ENCODE measurements at regions of chr17 and their contacts with region 1.

Region 1: DNA sequence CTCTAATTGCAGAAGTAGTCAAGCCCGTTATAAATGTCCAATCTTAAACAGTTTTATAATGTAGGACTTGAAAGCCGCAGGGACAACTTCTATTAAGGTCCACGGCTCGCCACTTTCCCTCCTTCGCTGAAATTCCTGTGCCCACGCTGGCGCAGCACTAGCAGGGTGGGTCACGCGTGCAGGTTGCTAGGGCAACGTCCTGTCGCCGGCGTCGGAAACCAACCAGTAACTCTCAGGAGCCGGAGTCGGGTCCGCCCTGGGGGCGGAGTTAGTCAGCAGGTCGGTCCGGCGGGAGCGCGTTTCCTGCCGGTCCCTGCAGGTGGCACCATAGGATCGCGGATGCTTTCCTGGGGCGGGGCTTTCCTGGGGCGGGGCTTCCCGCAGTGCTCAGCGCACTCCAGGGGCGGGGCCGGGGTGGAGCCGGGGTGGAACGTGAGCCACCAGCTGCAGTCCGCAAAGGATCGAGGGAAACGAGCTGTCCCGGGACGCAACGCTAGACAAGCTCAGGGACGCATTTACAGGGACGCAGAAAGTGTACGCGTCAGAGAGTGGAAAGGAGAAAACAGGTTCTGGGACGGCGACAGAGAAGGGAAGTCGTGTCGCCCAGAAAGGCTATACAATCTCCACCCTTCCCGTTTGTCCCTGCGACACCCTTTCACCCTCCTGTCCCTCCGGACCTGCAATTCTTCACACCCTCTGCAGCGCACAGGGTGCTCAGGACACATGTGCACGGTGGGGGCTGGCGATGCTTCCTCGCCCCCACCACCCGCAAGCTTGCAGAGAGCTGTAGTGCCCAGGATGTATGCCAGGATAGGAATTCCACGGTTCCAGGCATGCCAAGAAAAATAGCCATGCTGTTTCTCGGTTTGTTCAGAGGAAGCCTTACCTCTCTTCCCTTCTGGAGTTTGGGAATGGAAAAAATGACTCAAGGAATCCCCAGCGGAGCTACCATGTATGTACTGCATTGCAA is 12.4 kb downstream of the COPZ2 start:
- DNase-seq: peak; percentile 96
- H3K4me3 Mint-ChIP-seq: peak overlapping the region; percentile 90
- H3K27ac Mint-ChIP-seq: peak overlapping the region; percentile 100
- H3K4me1 Mint-ChIP-seq: peaks cover 40% of the 10 kb centered on the region
- H3K27me3 Mint-ChIP-seq: no peaks in the 10 kb centered on the region
- CTCF ChIP-seq: peak; percentile 77

Region 2: DNA sequence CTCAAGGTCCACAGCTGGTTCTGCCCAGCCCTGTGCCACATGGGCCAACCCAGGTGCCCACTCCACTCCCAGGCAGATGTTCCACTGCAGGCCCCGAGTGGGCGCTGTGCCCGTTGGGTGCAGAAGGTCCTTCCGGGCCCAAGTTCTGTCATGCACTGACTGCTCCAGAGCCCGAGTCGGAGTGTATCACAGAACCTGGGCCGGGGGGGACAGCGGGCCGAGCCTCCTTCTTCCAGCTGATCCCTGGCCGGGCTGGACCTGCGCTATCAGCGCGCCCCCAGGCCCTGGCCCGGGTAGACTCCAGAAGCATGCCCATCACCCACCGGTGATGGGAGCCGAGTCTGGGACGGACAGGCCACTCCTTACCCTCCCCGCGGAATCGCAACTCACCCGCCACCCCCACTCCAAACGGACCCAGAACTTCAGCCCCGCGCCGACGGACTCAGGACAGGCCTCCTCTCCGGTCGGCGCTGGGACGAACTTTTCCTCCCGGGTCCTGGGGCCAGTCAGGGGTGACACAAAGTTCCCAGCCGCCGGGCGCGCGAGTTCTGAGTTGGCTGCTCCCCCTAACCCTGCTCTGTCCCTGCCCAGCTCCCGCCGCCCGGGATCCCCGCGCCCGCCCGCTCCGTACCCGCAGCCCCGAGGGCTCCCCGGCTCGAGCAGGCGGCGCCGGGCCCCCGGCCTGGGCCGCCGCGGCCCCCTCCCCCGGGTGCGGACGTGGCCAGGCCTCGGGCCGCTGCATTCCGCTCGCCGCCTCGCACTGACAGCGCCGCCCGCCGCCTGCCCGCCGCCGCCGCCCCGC is 12.0 kb after region 1 on chr17 and contains the start of gene COPZ2:
- CTCF ChIA-PET with region 1: interaction called, 61 read pairs
- POLR2A ChIA-PET with region 1: interaction called, 7 read pairs
- intact Hi-C with region 1: no loop called
- DNase-seq: no peak
- H3K4me3 Mint-ChIP-seq: peak within 1 kb of the TSS; percentile 63
- H3K27ac Mint-ChIP-seq: no peak within 1 kb of the TSS
- H3K4me1 Mint-ChIP-seq: no peaks in the 10 kb centered on the region
- H3K27me3 Mint-ChIP-seq: no peaks in the 10 kb centered on the region
- CTCF ChIP-seq: no peak
- total RNA-seq, gene COPZ2: 2.5 TPM in 1 of 2 replicates, not detected in the other

Region 3: GRCh38 chr17:48054238-48055185 is 29.3 kb after region 1 on chr17:
- CTCF ChIA-PET with region 1: interaction called, 19 read pairs
- POLR2A ChIA-PET with region 1: interaction called, 220 read pairs
- intact Hi-C with region 1: no loop called
- DNase-seq: peak; percentile 76
- H3K4me3 Mint-ChIP-seq: peak overlapping the region; percentile 91
- H3K27ac Mint-ChIP-seq: peak overlapping the region; percentile 93
- H3K4me1 Mint-ChIP-seq: peaks cover 67% of the 10 kb centered on the region
- H3K27me3 Mint-ChIP-seq: no peaks in the 10 kb centered on the region
- CTCF ChIP-seq: no peak

Region 4: GRCh38 chr17:48068491-48068961 is 43.3 kb after region 1 on chr17:
- CTCF ChIA-PET with region 1: interaction called, 202 read pairs
- POLR2A ChIA-PET with region 1: interaction called, 74 read pairs
- intact Hi-C with region 1: no loop called
- DNase-seq: no peak
- H3K4me3 Mint-ChIP-seq: no peak overlapping the region
- H3K27ac Mint-ChIP-seq: no peak overlapping the region
- H3K4me1 Mint-ChIP-seq: peaks cover 21% of the 10 kb centered on the region
- H3K27me3 Mint-ChIP-seq: no peaks in the 10 kb centered on the region
- CTCF ChIP-seq: peak; percentile 19

Region 5: DNA sequence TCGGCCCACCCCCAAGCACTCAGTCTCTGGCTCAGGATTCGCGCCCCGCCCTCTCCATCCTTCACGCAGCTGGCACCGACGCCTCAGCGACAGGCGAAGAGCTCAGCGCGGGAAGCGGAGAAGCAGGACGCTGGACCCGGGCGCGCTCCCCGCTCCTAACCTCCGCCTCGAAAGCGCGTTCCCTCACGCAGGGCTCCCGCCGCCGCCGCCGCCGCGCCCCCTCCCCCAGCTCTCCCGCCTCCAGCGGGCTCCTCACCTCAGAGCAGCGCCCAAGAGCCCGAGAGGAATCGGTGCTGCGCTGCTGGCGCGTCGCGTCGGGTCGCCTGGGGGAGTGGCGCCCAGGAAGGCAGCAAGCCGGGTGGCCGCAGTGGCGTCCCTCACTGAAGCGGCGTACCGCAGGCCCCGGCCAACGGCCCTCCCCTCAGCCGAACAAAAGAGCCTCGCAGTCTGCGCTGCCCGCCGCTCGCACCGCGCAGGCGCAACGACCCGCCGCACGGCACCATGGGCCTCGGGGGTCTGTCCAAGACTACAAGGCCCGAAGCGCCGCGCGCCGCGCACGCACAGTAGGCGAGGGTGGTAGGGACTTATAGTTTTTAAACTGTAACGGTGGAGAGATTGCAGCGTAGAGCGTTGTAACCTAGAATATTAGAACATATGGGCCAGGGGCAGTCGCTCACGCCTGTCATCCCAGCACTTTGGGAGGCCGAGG is 75.9 kb after region 1 on chr17 and contains the start of gene CBX1:
- CTCF ChIA-PET with region 1: interaction called, 10 read pairs
- POLR2A ChIA-PET with region 1: interaction called, 59 read pairs
- intact Hi-C with region 1: no loop called
- DNase-seq: peak; percentile 91
- H3K4me3 Mint-ChIP-seq: peak within 1 kb of the TSS; percentile 92
- H3K27ac Mint-ChIP-seq: peak within 1 kb of the TSS; percentile 20
- H3K4me1 Mint-ChIP-seq: peaks cover 10% of the 10 kb centered on the region
- H3K27me3 Mint-ChIP-seq: no peaks in the 10 kb centered on the region
- CTCF ChIP-seq: no peak
- total RNA-seq, gene CBX1: 77.3 and 81.2 TPM in 2 replicates

Region 6: DNA sequence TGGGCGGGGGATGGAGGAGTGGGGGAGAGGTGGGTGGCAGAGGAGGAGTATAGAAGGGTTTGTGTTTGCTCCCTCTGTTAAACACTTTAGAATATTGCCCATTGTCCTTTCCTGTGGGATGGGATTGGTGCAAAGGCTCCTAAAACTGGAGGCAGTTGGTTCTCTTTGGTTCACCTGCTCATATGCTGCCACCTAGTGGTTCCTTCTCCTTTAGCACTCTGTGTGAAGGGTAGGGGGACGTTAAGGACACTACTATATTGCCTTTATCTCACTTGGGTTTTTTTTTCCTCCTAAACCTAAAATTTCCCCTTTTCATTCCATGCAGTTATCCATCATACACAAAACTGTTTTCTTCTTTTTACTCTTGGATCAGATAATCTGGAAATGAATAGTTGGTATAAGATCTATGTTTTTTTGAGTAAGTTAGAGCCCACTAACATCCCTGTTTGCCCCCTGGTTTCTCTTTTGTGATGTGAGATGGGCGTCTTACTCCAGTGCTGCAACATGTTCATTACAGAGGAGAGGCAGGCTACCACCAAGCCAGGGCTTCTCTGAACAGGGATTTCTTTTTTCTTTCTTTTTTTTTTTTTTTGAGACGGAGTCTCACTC is 106.1 kb after region 1 on chr17:
- CTCF ChIA-PET with region 1: interaction called, 18 read pairs
- POLR2A ChIA-PET with region 1: interaction called, 11 read pairs
- intact Hi-C with region 1: loop called (anchors 1 kb)
- DNase-seq: peak; percentile 85
- H3K4me3 Mint-ChIP-seq: no peak overlapping the region
- H3K27ac Mint-ChIP-seq: no peak overlapping the region
- H3K4me1 Mint-ChIP-seq: peaks cover 13% of the 10 kb centered on the region
- H3K27me3 Mint-ChIP-seq: no peaks in the 10 kb centered on the region
- CTCF ChIP-seq: peak; percentile 76

Measured in MCF 10A (cell line).